ENCODE measurements at regions of chr2 and their contacts with region 1.

Region 1: GRCh38 chr2:219229305-219230058 is at the starts of genes ANKZF1 and ATG9A:
- DNase-seq: peak; percentile 98
- ATAC-seq: peak; percentile 97
- H3K4me3 ChIP-seq: peak within 1 kb of the TSS; percentile 86 to 98 (median 92)
- H3K4me3 Mint-ChIP-seq: peak within 1 kb of the TSS; percentile 99
- H3K27ac ChIP-seq: peak within 1 kb of the TSS; percentile 74 to 87
- H3K27ac Mint-ChIP-seq: peak within 1 kb of the TSS; percentile 98
- H3K4me1 ChIP-seq: peaks cover 17 to 23% of the 10 kb centered on the region in 2 donors
- H3K4me1 Mint-ChIP-seq: peaks cover 38% of the 10 kb centered on the region
- H3K27me3 ChIP-seq: no peaks in the 10 kb centered on the region
- H3K27me3 Mint-ChIP-seq: no peaks in the 10 kb centered on the region
- CTCF ChIP-seq: no peak
- total RNA-seq, gene ANKZF1: 181 and 199 TPM in 2 replicates
- total RNA-seq, gene ATG9A: 59.4 and 65.5 TPM in 2 replicates

Region 2: GRCh38 chr2:219245148-219245898 is 15.8 kb after region 1 on chr2 and contains the starts of genes GLB1L and STK16:
- CTCF ChIA-PET with region 1: interaction called, 19 read pairs
- POLR2A ChIA-PET with region 1: interaction called, 26 read pairs
- intact Hi-C with region 1: loop called (anchors 1 kb)
- DNase-seq: peak; percentile 93
- ATAC-seq: peak; percentile 67
- H3K4me3 ChIP-seq: peak within 1 kb of the TSS; percentile 50 to 98 (median 94)
- H3K4me3 Mint-ChIP-seq: peak within 1 kb of the TSS; percentile 92
- H3K27ac ChIP-seq: peak within 1 kb of the TSS; percentile 87 to 92
- H3K27ac Mint-ChIP-seq: peak within 1 kb of the TSS; percentile 96
- H3K4me1 ChIP-seq: peaks cover 52 to 58% of the 10 kb centered on the region in 2 donors
- H3K4me1 Mint-ChIP-seq: peaks cover 62% of the 10 kb centered on the region
- H3K27me3 ChIP-seq: no peaks in the 10 kb centered on the region
- H3K27me3 Mint-ChIP-seq: no peaks in the 10 kb centered on the region
- CTCF ChIP-seq: no peak
- total RNA-seq, gene GLB1L: 3.9 and 4.1 TPM in 2 replicates
- total RNA-seq, gene STK16: 29.0 and 29.3 TPM in 2 replicates

Region 3: DNA sequence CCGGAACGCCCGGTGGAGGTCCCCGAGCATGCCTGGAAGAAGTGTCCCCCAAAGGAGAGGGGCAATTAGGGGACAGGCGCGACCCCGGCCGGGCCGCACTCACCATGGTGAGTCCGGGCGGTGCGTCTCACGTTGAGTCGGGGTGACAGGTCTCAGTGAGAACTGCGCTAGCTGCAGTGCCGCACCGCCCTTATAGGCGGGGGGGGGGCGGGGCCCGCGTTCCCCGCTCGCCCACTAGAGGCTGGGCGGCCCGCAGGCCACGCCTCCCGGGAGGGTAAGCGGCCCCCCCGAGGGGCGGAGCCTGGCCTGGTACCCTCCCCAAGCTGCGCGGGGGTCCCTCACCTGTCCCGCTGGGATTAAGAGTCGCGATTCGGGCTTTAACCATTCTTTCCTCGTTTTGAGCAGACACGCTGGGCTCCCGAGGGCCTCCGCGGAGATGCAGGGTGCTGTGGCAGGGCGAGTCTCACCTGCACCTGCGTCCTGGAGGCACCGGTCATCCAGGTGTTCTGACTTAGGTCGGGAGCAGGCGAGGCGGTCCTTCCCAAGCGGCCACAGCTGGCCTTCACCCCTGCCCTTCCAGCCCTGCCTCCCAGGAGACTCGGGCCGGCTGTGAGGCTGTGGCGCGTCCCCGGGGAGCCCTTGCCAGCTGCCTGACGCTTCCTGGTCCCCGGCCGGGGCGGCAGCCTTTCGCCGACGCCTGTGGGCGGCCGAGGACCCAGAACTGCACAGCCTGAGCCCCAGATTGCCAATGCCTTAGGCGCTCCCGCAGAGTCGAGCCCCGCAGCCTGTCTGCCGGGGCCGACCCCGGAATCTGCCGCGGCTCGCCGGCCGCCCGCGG is 24.5 kb after region 1 on chr2 and contains the start of gene TUBA4A:
- CTCF ChIA-PET with region 1: interaction called, 29 read pairs
- POLR2A ChIA-PET with region 1: interaction called, 56 read pairs
- intact Hi-C with region 1: loop called (anchors 1 kb)
- DNase-seq: peak; percentile 93
- ATAC-seq: peak; percentile 72
- H3K4me3 ChIP-seq: peak within 1 kb of the TSS; percentile 83 to 97 (median 90)
- H3K4me3 Mint-ChIP-seq: peak within 1 kb of the TSS; percentile 87
- H3K27ac ChIP-seq: peak within 1 kb of the TSS; percentile 93 to 94
- H3K27ac Mint-ChIP-seq: peak within 1 kb of the TSS; percentile 96
- H3K4me1 ChIP-seq: peaks cover 34 to 44% of the 10 kb centered on the region in 2 donors
- H3K4me1 Mint-ChIP-seq: peaks cover 49% of the 10 kb centered on the region
- H3K27me3 ChIP-seq: no peaks in the 10 kb centered on the region
- H3K27me3 Mint-ChIP-seq: no peaks in the 10 kb centered on the region
- CTCF ChIP-seq: no peak
- total RNA-seq, gene TUBA4A: 196 and 213 TPM in 2 replicates